Activated CD4-positive, alpha-beta T cell treated with anti-CD3 and anti-CD28 coated beads for 36 hours (primary cell): ENCODE measurements at regions of chr16 and their contacts with region 1.

Region 1: DNA sequence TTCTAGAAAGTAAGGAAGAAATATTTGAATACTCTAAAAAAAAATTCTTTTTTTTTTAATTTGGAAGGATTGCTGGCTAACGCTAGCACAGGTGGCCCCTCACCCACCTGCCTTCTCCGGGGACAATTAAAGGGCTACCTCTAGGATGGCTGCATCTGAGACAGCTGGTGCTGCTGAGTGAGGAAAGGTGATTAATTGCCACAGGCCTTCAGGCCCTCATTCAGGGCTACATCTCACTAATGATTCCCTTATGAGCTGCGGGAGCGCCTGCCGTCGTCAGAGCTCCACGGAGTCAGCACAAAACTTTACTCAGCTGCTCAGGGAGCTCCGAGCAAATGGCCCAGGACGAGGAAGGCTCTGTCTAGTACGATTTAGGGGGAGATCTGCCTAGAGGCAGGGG is 27.0 kb upstream of the AKTIP start:
- DNase-seq: no peak
- ATAC-seq: no peak
- H3K4me3 Mint-ChIP-seq: no peak overlapping the region
- H3K27ac Mint-ChIP-seq: no peak overlapping the region
- H3K4me1 Mint-ChIP-seq: peaks cover 13% of the 10 kb centered on the region
- H3K27me3 Mint-ChIP-seq: no peaks in the 10 kb centered on the region

Region 2: DNA sequence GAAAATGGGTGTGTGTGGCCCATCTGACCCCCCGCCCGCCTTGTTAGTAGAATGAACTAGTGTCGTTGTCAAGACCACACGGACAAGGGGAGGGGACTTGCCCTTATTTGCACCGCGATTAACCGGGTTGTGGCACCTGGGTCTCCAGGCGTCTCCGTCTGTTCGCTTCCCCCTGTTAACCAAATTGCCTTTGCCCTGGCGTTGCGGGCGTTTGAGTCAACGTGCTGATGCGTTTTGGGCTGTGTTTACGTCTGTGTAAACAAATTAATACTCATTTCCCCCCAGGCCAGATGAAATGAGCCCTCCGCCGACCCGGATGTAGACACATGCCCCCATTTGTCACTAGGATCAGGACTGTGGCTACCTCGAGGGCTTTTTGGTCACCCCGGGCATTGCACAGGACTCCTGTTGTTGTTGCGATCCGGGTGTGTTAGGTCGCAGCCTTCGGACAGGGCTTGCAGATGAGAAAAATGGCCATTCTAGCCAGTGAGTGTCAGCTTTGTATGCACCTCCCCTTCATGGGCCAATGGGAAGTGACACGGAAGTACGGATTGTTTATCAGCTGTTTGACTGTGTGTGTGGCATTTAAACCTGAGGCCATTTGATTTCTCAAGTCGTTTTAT is 94.9 kb before region 1 on chr16:
- CTCF ChIA-PET with region 1: no interaction called
- POLR2A ChIA-PET with region 1: no interaction called
- intact Hi-C with region 1: loop called in 1 of 2 experiments (anchors 1 kb)
- DNase-seq: peak; percentile 69
- ATAC-seq: peak; percentile 67
- H3K4me3 Mint-ChIP-seq: peak overlapping the region; percentile 98
- H3K27ac Mint-ChIP-seq: peak overlapping the region; percentile 95
- H3K4me1 Mint-ChIP-seq: peaks cover 42% of the 10 kb centered on the region
- H3K27me3 Mint-ChIP-seq: no peaks in the 10 kb centered on the region

Region 3: GRCh38 chr16:53503270-53503923 is 26.6 kb before region 1 on chr16:
- CTCF ChIA-PET with region 1: no interaction called
- POLR2A ChIA-PET with region 1: interaction called, 3 read pairs
- intact Hi-C with region 1: loop called in 1 of 2 experiments (anchors 1 kb)
- DNase-seq: peak; percentile 100
- ATAC-seq: peak; percentile 92
- H3K4me3 Mint-ChIP-seq: peak overlapping the region; percentile 94
- H3K27ac Mint-ChIP-seq: peak overlapping the region; percentile 96
- H3K4me1 Mint-ChIP-seq: peaks cover 60% of the 10 kb centered on the region
- H3K27me3 Mint-ChIP-seq: no peaks in the 10 kb centered on the region

Region 4: GRCh38 chr16:53549970-53550690 is 20.1 kb after region 1 on chr16:
- CTCF ChIA-PET with region 1: interaction called, 19 read pairs
- POLR2A ChIA-PET with region 1: interaction called, 3 read pairs
- intact Hi-C with region 1: no loop called
- DNase-seq: peak; percentile 69
- ATAC-seq: peak; percentile 82
- H3K4me3 Mint-ChIP-seq: no peak overlapping the region
- H3K27ac Mint-ChIP-seq: no peak overlapping the region
- H3K4me1 Mint-ChIP-seq: peaks cover 29% of the 10 kb centered on the region
- H3K27me3 Mint-ChIP-seq: peaks cover 19% of the 10 kb centered on the region

Region 5: DNA sequence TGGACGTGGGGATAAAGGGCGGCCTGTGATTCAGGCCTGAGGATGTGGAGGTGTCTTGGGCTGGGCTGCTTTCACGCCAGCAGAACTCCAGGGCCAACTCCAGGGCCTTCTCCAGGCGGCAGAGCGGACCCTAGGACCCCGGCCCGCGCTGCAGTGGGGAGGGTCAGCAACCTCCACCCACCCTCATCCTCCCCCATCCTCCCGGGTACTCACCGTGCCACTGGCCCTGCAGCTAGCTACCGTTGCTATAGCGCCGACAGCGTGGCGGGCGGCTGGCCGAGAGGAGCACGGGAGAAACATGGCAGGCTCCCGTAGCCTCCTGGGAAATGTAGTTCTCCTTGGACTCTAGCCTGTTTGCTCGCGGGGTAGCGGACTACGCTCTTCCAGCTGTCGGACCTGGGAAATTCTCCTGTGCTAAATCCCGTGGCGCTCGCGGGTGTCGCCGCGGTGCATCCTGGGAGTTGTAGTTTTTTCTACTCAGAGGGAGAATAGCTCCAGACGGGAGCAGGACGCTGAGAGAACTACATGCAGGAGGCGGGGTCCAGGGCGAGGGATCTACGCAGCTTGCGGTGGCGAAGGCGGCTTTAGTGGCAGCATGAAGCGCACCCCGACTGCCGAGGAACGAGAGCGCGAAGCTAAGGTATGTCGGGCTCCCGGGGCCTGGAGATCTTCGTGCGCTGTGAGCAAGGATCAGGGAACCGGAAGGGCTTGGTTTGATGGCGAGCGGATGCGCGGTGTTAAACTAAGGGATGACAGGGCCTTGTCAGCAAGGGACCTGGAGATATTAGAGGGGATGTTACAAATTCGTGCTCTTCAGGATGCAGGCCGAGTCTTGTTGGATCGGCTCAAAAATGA is 173.8 kb after region 1 on chr16 and contains the starts of genes FTO and RPGRIP1L:
- CTCF ChIA-PET with region 1: no interaction called
- POLR2A ChIA-PET with region 1: no interaction called
- intact Hi-C with region 1: loop called in 1 of 2 experiments (anchors 1 kb)
- DNase-seq: peak; percentile 99
- ATAC-seq: peak; percentile 98
- H3K4me3 Mint-ChIP-seq: peak within 1 kb of the TSS; percentile 96
- H3K27ac Mint-ChIP-seq: peak within 1 kb of the TSS; percentile 97
- H3K4me1 Mint-ChIP-seq: peaks cover 35% of the 10 kb centered on the region
- H3K27me3 Mint-ChIP-seq: no peaks in the 10 kb centered on the region
- total RNA-seq, gene FTO: 50.9 to 57.6 TPM
- total RNA-seq, gene RPGRIP1L: 7.8 to 10.2 TPM